Activated T-helper 1 cell treated with anti-CD3 and anti-CD28 coated beads, Interleukin-12 subunit alpha, Interleukin-12 subunit beta, Interleukin-2, Interleukin-4 antibody, amounts not matched to agents 30 ng/mL and 10 ng/mL and 1 ng/mL, durations not matched to agents 14 hours and 24 hours and 36 hours (primary cell): ENCODE measurements at regions of chr7 and their contacts with region 1.

Region 1: GRCh38 chr7:15128716-15129115 is 226.2 kb upstream of the DGKB start:
- DNase-seq: no peak
- H3K4me3 Mint-ChIP-seq: no peak overlapping the region
- H3K27ac Mint-ChIP-seq: no peak overlapping the region
- H3K4me1 Mint-ChIP-seq: no peaks in the 10 kb centered on the region
- H3K27me3 Mint-ChIP-seq: no peaks in the 10 kb centered on the region

Region 2: GRCh38 chr7:14579971-14580370 is 548.7 kb before region 1 on chr7:
- intact Hi-C with region 1: no loop called
- DNase-seq: no peak
- H3K4me3 Mint-ChIP-seq: no peak overlapping the region
- H3K27ac Mint-ChIP-seq: no peak overlapping the region
- H3K4me1 Mint-ChIP-seq: no peaks in the 10 kb centered on the region
- H3K27me3 Mint-ChIP-seq: no peaks in the 10 kb centered on the region

Region 3: GRCh38 chr7:14685167-14685566 is 443.5 kb before region 1 on chr7:
- intact Hi-C with region 1: no loop called
- DNase-seq: no peak
- H3K4me3 Mint-ChIP-seq: no peak overlapping the region
- H3K27ac Mint-ChIP-seq: no peak overlapping the region
- H3K4me1 Mint-ChIP-seq: no peaks in the 10 kb centered on the region
- H3K27me3 Mint-ChIP-seq: no peaks in the 10 kb centered on the region

Region 4: DNA sequence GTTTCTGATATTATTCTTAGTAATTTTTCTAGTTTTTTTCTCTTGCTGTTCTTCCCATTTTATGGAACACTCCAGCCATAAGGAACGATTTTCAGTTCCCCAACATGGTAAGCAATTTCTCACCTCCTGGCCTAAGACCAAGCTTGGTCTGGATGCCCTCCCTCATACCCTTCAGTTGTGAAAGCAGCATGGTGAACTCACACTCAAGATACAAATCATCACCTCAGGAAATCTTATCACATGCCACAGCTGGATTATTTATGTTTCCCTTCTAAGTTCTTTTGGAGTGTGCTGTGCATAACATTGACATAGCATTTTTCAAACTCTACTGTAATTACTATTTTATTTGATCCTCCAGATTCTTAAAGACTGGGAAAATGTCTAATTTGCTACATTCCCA is 216.5 kb after region 1 on chr7:
- intact Hi-C with region 1: loop called (anchors 10 kb)
- DNase-seq: no peak
- H3K4me3 Mint-ChIP-seq: no peak overlapping the region
- H3K27ac Mint-ChIP-seq: no peak overlapping the region
- H3K4me1 Mint-ChIP-seq: no peaks in the 10 kb centered on the region
- H3K27me3 Mint-ChIP-seq: no peaks in the 10 kb centered on the region